Activated B cell treated with CpG ODN at 0.5 μM for 24 hours (primary cell): ENCODE measurements at regions of chr7 and their contacts with region 1.

Region 1: DNA sequence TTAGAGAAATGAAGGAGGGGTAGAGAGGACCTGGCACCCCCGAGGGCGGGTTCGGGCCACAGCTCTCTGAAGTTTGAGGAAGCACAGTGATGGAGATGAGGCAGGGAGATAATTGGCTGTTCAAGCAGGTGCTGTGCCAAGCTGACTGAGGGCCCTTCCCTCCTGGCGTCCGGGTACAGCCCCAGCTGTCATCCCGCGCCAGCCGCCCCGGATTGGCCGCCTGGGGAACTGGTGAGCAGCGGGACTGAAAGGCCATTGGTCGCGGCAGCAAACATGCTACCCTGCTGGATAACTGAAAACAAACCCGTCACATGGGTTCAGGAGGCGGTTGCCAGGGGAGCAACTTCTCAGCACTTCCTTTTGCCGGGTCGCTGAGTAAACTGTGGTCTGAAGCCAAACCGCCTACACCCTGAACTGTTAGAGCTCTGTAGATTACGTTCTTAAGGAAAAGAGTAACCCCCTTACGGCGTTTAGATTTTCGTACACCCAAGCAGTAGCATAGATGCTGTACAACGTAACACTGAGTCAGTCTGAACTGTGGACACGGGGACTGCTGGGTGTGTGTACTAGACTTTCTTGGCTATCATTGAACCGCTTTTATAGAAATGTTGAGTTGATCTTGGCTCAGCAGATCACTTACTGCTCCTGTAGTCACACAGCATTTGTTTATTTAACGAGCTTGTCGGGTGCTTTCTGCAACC is 1.3 kb downstream of the INSIG1 start:
- DNase-seq: peak; percentile 86
- ATAC-seq: peak; percentile 72
- H3K4me3 Mint-ChIP-seq: peak overlapping the region; percentile 94
- H3K27ac Mint-ChIP-seq: peak overlapping the region; percentile 94
- H3K4me1 Mint-ChIP-seq: peaks cover 42% of the 10 kb centered on the region
- H3K27me3 Mint-ChIP-seq: no peaks in the 10 kb centered on the region
- CTCF ChIP-seq: no peak

Region 2: GRCh38 chr7:153581419-153581818 is 1717.6 kb before region 1 on chr7:
- CTCF ChIA-PET with region 1: no interaction called
- POLR2A ChIA-PET with region 1: no interaction called
- intact Hi-C with region 1: no loop called
- DNase-seq: no peak
- ATAC-seq: no peak
- H3K4me3 Mint-ChIP-seq: no peak overlapping the region
- H3K27ac Mint-ChIP-seq: no peak overlapping the region
- H3K4me1 Mint-ChIP-seq: no peaks in the 10 kb centered on the region
- H3K27me3 Mint-ChIP-seq: no peaks in the 10 kb centered on the region
- CTCF ChIP-seq: no peak

Region 3: DNA sequence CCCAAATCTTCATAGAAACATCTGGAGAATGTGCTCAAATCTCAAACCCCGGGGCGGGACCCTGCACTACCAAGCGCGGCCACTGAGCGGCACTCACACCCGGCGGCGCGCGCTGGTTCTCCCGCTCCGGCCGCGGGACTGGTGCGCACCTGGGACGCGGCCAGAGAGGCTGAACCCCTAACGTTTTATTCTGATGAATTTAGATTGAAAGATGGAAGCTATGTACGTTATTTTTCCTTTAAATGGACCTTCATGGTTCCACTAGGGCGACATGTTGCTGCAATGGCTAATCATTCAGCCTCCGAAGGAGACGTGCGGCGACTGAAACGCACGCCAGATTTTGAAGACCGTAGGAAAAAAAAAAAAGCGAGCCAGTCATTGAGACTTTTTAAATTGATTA is 108.3 kb before region 1 on chr7:
- CTCF ChIA-PET with region 1: interaction called, 13 read pairs
- POLR2A ChIA-PET with region 1: interaction called, 11 read pairs
- intact Hi-C with region 1: loop called (anchors 1 kb)
- DNase-seq: peak; percentile 70
- ATAC-seq: peak; percentile 94
- H3K4me3 Mint-ChIP-seq: no peak overlapping the region
- H3K27ac Mint-ChIP-seq: no peak overlapping the region
- H3K4me1 Mint-ChIP-seq: peaks cover 8% of the 10 kb centered on the region
- H3K27me3 Mint-ChIP-seq: peaks cover 7% of the 10 kb centered on the region
- CTCF ChIP-seq: no peak

Region 4: DNA sequence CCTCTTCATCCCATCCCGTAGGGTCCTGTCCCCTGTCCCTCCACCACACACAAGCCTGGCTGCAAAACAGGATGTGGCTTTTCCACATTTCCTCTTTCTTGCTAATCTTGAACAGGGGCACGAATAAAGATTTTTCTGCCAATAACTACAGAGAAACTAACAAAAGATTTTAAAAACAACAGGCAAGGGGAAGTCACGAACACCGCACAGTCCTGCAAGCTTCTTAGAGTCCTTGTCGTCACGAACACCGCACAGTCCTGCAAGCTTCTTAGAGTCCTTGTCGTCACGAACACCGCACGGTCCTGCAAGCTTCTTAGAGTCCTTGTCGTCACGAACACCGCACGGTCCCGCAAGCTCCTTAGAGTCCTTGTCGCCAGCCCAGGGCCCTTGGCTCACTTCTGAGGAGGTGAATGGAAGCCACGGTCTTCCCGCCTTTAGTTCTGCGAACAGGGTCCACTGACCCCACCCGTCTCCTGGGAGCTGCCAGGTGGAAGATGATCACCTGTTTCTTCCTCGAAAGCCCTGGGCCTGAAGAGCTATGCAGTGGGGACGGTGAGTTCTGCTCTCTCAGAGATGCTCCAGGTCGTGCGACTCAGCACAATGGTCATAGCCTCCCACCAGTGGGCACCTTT is 11.6 kb before region 1 on chr7:
- CTCF ChIA-PET with region 1: interaction called, 3 read pairs
- POLR2A ChIA-PET with region 1: interaction called, 13 read pairs
- intact Hi-C with region 1: no loop called
- DNase-seq: no peak
- ATAC-seq: no peak
- H3K4me3 Mint-ChIP-seq: no peak overlapping the region
- H3K27ac Mint-ChIP-seq: no peak overlapping the region
- H3K4me1 Mint-ChIP-seq: peaks cover 30% of the 10 kb centered on the region
- H3K27me3 Mint-ChIP-seq: peaks cover 7% of the 10 kb centered on the region
- CTCF ChIP-seq: no peak

Region 5: GRCh38 chr7:155644178-155644970 is 345.4 kb after region 1 on chr7 and contains the start of gene RBM33:
- CTCF ChIA-PET with region 1: no interaction called
- POLR2A ChIA-PET with region 1: no interaction called
- intact Hi-C with region 1: loop called (anchors 1 kb)
- DNase-seq: peak; percentile 86
- ATAC-seq: peak; percentile 74
- H3K4me3 Mint-ChIP-seq: peak within 1 kb of the TSS; percentile 98
- H3K27ac Mint-ChIP-seq: peak within 1 kb of the TSS; percentile 98
- H3K4me1 Mint-ChIP-seq: peaks cover 47% of the 10 kb centered on the region
- H3K27me3 Mint-ChIP-seq: no peaks in the 10 kb centered on the region
- CTCF ChIP-seq: no peak
- total RNA-seq, gene RBM33: 107 and 117 TPM in 2 replicates

Region 6: GRCh38 chr7:155763691-155764437 is 464.9 kb after region 1 on chr7:
- CTCF ChIA-PET with region 1: no interaction called
- POLR2A ChIA-PET with region 1: no interaction called
- intact Hi-C with region 1: loop called (anchors 10 kb)
- DNase-seq: no peak
- ATAC-seq: peak; percentile 54
- H3K4me3 Mint-ChIP-seq: peak overlapping the region; percentile 61
- H3K27ac Mint-ChIP-seq: peak overlapping the region; percentile 85
- H3K4me1 Mint-ChIP-seq: peaks cover 38% of the 10 kb centered on the region
- H3K27me3 Mint-ChIP-seq: no peaks in the 10 kb centered on the region
- CTCF ChIP-seq: no peak

Region 7: GRCh38 chr7:157138424-157139110 is 1839.6 kb after region 1 on chr7 and contains the start of gene UBE3C:
- CTCF ChIA-PET with region 1: no interaction called
- POLR2A ChIA-PET with region 1: interaction called, 3 read pairs
- intact Hi-C with region 1: loop called (anchors 2 kb)
- DNase-seq: peak; percentile 91
- ATAC-seq: peak; percentile 89
- H3K4me3 Mint-ChIP-seq: peak within 1 kb of the TSS; percentile 81
- H3K27ac Mint-ChIP-seq: peak within 1 kb of the TSS; percentile 88
- H3K4me1 Mint-ChIP-seq: peaks cover 37% of the 10 kb centered on the region
- H3K27me3 Mint-ChIP-seq: no peaks in the 10 kb centered on the region
- CTCF ChIP-seq: no peak
- total RNA-seq, gene UBE3C: 52.8 and 65.3 TPM in 2 replicates